PC-9 (cell line): ENCODE measurements at regions of chr13 and their contacts with region 1.

Region 1: DNA sequence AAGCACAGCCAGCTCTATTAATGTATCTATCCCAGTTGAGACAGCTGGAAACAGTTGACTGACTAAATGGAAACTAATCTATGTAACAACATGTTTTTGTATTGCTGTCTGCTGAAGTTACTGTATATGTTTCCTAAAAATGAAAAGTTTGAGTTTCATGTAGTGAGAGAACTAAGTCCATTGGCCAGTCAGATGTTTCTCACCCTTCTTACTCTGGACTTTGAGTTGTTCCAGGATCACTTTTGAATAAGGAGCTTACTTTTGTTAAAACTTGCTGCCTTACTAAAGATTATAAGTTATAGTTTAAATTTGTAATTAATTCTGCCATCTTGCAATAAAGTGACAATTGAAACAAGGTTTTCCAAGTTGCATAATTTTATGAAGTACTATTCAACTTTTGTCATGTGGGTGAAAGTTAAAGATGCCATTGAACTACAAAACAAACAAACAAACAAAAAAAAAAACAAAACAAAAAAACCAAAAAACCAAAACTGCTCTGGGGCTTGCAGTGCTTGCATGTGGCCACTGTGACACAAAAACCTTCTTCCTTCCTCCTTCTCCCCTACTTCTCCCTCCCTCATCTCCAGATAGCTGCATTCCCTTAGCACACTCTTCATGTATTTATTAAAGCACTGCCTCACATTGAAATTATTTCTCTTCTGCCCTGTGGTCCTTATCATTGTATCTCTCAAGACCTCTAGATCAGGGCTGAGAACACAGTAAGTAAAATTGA is 15.3 kb downstream of the WDFY2 start:
- DNase-seq: no peak
- H3K4me3 ChIP-seq: no peak overlapping the region
- H3K27ac ChIP-seq: no peak overlapping the region
- H3K4me1 ChIP-seq: peaks cover 36% of the 10 kb centered on the region
- H3K27me3 ChIP-seq: no peaks in the 10 kb centered on the region
- CTCF ChIP-seq: no peak

Region 2: GRCh38 chr13:51202477-51203046 is 397.0 kb before region 1 on chr13:
- CTCF ChIA-PET with region 1: no interaction called
- POLR2A ChIA-PET with region 1: interaction called, 10 read pairs
- intact Hi-C with region 1: no loop called
- DNase-seq: no peak
- H3K4me3 ChIP-seq: no peak overlapping the region
- H3K27ac ChIP-seq: no peak overlapping the region
- H3K4me1 ChIP-seq: no peaks in the 10 kb centered on the region
- H3K27me3 ChIP-seq: peaks cover 65% of the 10 kb centered on the region
- CTCF ChIP-seq: no peak

Region 3: GRCh38 chr13:51435002-51435578 is 164.5 kb before region 1 on chr13:
- CTCF ChIA-PET with region 1: no interaction called
- POLR2A ChIA-PET with region 1: no interaction called
- intact Hi-C with region 1: no loop called
- DNase-seq: no peak
- H3K4me3 ChIP-seq: no peak overlapping the region
- H3K27ac ChIP-seq: no peak overlapping the region
- H3K4me1 ChIP-seq: no peaks in the 10 kb centered on the region
- H3K27me3 ChIP-seq: no peaks in the 10 kb centered on the region
- CTCF ChIP-seq: peak; percentile 80

Region 4: GRCh38 chr13:51663973-51664957 is 64.7 kb after region 1 on chr13:
- CTCF ChIA-PET with region 1: no interaction called
- POLR2A ChIA-PET with region 1: no interaction called
- intact Hi-C with region 1: no loop called
- DNase-seq: no peak
- H3K4me3 ChIP-seq: no peak overlapping the region
- H3K27ac ChIP-seq: no peak overlapping the region
- H3K4me1 ChIP-seq: peaks cover 11% of the 10 kb centered on the region; the same call in 1 of the 2 replicates
- H3K27me3 ChIP-seq: no peaks in the 10 kb centered on the region
- CTCF ChIP-seq: no peak

Region 5: DNA sequence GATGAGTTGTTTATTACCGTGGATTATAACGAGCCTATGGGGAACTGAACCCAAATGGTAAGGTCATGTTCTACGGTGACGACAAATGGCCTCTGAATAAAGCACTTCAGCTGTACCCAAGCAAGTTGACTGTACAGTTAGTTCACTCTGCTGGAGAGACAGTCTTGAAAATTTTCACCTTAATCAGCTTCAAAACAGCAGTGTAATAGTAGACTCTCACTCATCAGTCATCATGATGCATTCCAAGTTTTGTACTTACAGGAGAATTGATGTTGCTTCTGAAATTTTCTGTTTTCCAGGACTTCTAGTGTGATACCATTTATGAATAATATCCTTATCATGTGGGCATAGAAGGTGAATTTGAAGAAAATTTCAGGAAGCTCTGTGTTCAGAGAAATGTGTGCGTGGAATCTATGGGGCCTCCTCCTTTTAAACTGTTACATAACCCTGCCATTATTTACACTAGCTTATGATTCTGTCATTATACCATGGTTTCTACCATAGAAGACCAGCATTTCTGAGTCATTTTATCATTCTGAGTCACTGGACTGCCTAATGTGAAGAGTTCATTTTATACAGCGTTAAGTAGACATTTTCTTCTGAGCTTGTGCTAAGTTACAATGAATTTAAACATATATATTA is 81.5 kb after region 1 on chr13:
- CTCF ChIA-PET with region 1: no interaction called
- POLR2A ChIA-PET with region 1: interaction called, 10 read pairs
- intact Hi-C with region 1: no loop called
- DNase-seq: peak in 1 of 2 experiments; percentile 80
- H3K4me3 ChIP-seq: no peak overlapping the region
- H3K27ac ChIP-seq: peak overlapping the region; percentile 67
- H3K4me1 ChIP-seq: peaks cover 25% of the 10 kb centered on the region
- H3K27me3 ChIP-seq: no peaks in the 10 kb centered on the region
- CTCF ChIP-seq: no peak